ENCODE measurements at regions of chr17 and their contacts with region 1.

Region 1: DNA sequence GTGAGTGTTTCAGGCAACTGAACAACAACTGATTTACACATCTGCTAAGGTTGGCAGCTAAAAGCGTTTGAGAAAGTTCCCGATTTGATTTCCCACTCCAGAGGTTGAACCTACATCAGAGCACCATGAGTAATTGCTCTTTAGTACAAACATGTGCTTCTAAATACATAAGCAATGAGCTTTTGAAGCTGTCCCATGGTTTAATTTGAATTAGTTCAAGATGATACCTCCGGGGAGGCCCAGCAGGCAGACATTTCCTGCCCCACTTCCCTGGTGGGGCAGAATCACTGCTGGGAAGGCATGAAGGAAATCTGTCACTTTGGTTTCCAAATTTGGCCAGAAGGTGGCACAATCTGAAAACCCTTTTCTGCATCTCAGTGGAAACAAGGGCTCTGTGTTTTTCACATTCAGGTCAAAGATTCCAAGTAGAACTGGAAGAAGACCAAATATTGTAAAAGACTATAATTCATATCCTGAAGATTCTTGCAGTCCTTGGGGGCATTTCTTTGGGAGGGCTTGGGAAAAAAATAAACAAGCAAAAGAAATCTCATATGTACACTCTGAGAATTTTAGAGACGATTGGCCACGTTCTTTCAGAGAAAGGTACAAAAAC is 176.2 kb upstream of the FAM20A start:
- DNase-seq: peak in 1 of 2 donors; percentile 79
- H3K4me3 ChIP-seq: no peak overlapping the region
- H3K27ac ChIP-seq: no peak overlapping the region
- H3K4me1 ChIP-seq: peaks cover 0 to 5% of the 10 kb centered on the region in 2 donors
- H3K27me3 ChIP-seq: no peaks in the 10 kb centered on the region
- CTCF ChIP-seq: peak; percentile 42 to 68 (median 66)

Region 2: DNA sequence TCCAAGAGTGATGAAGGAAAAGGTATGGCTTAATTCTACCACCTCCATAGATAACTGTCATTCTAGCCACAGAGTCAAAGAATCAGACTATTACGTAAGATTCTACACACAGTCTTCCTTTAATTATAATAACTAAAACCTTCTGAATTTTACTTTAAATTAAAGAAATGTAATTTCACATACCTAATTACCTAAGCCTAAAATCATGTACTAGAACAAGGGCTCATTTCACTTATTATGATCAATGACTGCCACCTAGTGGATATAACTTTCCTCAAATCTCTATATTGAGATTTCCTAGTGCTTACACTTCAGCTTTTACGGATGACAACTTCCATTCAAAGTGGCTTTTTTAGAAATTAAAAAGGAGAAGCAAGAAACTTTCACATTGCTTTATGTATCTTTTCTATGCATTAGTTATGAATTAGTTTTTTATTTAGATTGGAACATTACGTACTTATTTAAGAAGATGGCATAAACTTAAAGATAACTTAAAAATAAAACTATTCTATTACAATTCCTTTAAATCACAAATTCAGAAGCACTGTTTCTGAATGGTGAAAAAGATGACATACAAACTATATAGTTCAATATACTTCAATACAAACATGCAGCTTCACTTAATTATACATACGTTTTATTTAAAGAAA is 469.5 kb after region 1 on chr17:
- intact Hi-C with region 1: loop called (anchors 1 kb)
- DNase-seq: no peak
- H3K4me3 ChIP-seq: no peak overlapping the region
- H3K27ac ChIP-seq: no peak overlapping the region
- H3K4me1 ChIP-seq: no peaks in the 10 kb centered on the region
- H3K27me3 ChIP-seq: no peaks in the 10 kb centered on the region
- CTCF ChIP-seq: peak; percentile 19 to 55 (median 39)